ENCODE measurements at regions of chr5 and their contacts with region 1.

Region 1: DNA sequence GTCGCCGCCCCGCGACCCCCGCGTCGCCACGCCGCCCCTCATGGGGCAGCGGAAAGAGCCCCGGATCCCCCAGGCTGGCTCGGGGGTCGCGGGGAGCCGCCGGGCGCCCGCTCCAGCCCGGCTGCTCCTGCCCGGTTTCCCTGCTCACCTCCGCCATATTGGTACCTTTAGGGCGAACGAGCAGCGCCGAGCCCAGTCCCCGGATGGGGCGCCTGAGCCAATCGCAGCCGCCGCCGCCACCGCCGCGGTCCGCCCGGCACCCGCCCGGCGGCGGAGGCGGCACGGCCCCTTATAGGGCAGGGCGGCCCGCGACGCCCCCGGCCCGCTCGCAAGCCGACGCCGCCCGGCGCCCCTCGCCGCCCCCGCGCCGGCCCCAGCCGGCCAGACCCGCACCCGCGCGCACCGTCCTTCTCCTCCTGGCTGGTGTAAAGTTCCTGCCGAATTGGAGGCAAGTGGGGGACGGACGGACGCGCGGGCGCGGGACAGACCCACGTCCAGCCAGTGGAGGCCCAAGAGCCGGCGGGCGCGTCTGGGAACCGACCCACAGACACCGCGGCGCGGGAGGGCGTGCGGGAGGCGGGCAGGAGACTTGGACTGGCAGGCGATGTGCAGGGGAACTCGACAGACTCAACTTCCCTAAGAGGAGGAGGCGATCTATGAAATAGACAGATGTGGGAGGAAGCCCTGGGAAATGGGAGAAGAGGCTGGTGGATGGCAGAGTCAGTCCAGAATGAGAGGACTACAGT is at the start of gene MIER3:
- DNase-seq: peak; percentile 79 to 83 (median 80)
- H3K4me3 ChIP-seq: peak within 1 kb of the TSS; percentile 57 to 72
- H3K4me3 Mint-ChIP-seq: peak within 1 kb of the TSS; percentile 94 to 98 (median 96)
- H3K27ac ChIP-seq: peak within 1 kb of the TSS; percentile 53
- H3K27ac Mint-ChIP-seq: peak within 1 kb of the TSS; percentile 92 to 96 (median 95)
- H3K4me1 ChIP-seq: peaks cover 16% of the 10 kb centered on the region
- H3K4me1 Mint-ChIP-seq: peaks cover 14 to 25% (median 20%) of the 10 kb centered on the region in 4 donors
- H3K27me3 ChIP-seq: peaks cover 5% of the 10 kb centered on the region
- H3K27me3 Mint-ChIP-seq: peaks cover 6 to 12% of the 10 kb centered on the region in 2 donors
- total RNA-seq, gene MIER3: 27.8 to 32.8 TPM

Region 2: DNA sequence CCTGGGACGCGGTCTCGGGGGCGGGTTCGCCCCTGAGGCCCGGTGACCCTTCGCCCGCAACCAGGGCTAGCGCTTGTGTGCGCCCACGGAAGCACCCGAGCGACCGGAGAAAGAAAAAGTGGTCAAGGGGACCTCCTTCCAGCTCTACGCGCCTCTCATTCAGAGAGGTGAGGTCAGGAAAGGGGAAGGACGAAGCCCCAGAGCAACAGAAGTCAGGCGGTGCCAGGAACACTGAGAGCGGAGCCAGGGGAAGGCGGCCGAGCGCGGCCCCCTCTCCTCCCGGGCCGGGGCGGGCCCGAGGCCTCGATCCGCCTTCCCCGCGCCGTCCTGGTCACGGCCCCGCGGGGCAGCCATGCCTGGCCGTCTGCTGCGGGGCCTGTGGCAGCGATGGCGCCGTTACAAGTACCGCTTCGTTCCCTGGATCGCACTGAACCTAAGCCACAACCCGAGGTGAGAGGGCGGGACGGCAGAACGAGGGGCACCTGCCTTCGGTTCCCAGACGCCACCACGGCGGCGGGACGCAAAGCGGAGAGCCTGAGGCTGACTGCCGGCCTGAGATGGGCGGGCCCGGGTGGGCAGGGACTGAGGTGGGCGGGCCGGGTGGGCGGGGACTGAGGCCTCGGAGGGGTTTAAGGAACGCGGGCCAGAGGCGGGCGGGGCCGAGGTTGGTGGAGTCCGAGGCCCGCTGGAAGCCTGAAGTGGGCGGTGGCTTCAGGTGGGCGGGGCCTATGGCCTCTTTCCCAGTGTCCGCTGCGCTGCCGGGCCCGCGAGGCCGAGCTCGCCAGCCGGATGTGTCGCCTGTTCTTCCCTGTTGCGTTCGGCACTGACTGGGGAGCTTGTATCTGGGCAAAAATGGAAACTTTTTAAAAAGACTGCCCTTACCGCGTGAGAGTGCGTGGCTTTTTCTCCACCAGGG is 42.6 kb before region 1 on chr5 and contains the start of gene SETD9:
- CTCF ChIA-PET with region 1: no interaction called
- POLR2A ChIA-PET with region 1: interaction called, 19 read pairs
- intact Hi-C with region 1: loop called (anchors 1 kb)
- DNase-seq: peak; percentile 76 to 83 (median 81)
- H3K4me3 ChIP-seq: peak within 1 kb of the TSS; percentile 88 to 97
- H3K4me3 Mint-ChIP-seq: peak within 1 kb of the TSS; percentile 89 to 98 (median 92)
- H3K27ac ChIP-seq: peak within 1 kb of the TSS; percentile 62
- H3K27ac Mint-ChIP-seq: peak within 1 kb of the TSS; percentile 65 to 95 (median 92)
- H3K4me1 ChIP-seq: peaks cover 15% of the 10 kb centered on the region
- H3K4me1 Mint-ChIP-seq: peaks cover 15 to 25% (median 17%) of the 10 kb centered on the region in 4 donors
- H3K27me3 ChIP-seq: no peaks in the 10 kb centered on the region
- H3K27me3 Mint-ChIP-seq: no peaks in the 10 kb centered on the region
- total RNA-seq, gene SETD9: 3.8 to 6.8 TPM

Region 3: GRCh38 chr5:56938858-56939257 is 13.3 kb before region 1 on chr5:
- CTCF ChIA-PET with region 1: no interaction called
- POLR2A ChIA-PET with region 1: no interaction called
- intact Hi-C with region 1: no loop called
- DNase-seq: no peak
- H3K4me3 ChIP-seq: no peak overlapping the region
- H3K4me3 Mint-ChIP-seq: no peak overlapping the region
- H3K27ac ChIP-seq: no peak overlapping the region
- H3K27ac Mint-ChIP-seq: no peak overlapping the region
- H3K4me1 ChIP-seq: no peaks in the 10 kb centered on the region
- H3K4me1 Mint-ChIP-seq: peaks cover 4 to 12% (median 9%) of the 10 kb centered on the region in 4 donors
- H3K27me3 ChIP-seq: no peaks in the 10 kb centered on the region
- H3K27me3 Mint-ChIP-seq: no peaks in the 10 kb centered on the region

Measured in CD4-positive, alpha-beta memory T cell (primary cell).